Natural killer cell (primary cell): ENCODE measurements at regions of chr3 and their contacts with region 1.

Region 1: GRCh38 chr3:48478596-48479555 is 25.1 kb downstream of the SHISA5 start:
- DNase-seq: peak; percentile 64 to 81
- ATAC-seq: peak; percentile 72 to 87 (median 81)
- H3K4me3 ChIP-seq: peak overlapping the region; percentile 24
- H3K4me3 Mint-ChIP-seq: peak overlapping the region; percentile 81
- H3K27ac ChIP-seq: peak overlapping the region; percentile 86
- H3K27ac Mint-ChIP-seq: peak overlapping the region; percentile 96 to 97
- H3K4me1 ChIP-seq: peaks cover 33% of the 10 kb centered on the region
- H3K4me1 Mint-ChIP-seq: peaks cover 35 to 37% of the 10 kb centered on the region in 2 donors
- H3K27me3 ChIP-seq: no peaks in the 10 kb centered on the region
- H3K27me3 Mint-ChIP-seq: no peaks in the 10 kb centered on the region
- CTCF ChIP-seq: no peak

Region 2: GRCh38 chr3:48556793-48557626 is 78.1 kb after region 1 on chr3 and contains the start of gene PFKFB4:
- intact Hi-C with region 1: loop called (anchors 2 kb)
- DNase-seq: peak; percentile 99 to 100
- ATAC-seq: peak; percentile 88 to 95 (median 88)
- H3K4me3 ChIP-seq: peak within 1 kb of the TSS; percentile 46
- H3K4me3 Mint-ChIP-seq: peak within 1 kb of the TSS; percentile 93
- H3K27ac ChIP-seq: peak within 1 kb of the TSS; percentile 11
- H3K27ac Mint-ChIP-seq: peak within 1 kb of the TSS; percentile 44 to 67
- H3K4me1 ChIP-seq: peaks cover 52% of the 10 kb centered on the region
- H3K4me1 Mint-ChIP-seq: peaks cover 20 to 38% of the 10 kb centered on the region in 2 donors
- H3K27me3 ChIP-seq: no peaks in the 10 kb centered on the region
- H3K27me3 Mint-ChIP-seq: no peaks in the 10 kb centered on the region
- CTCF ChIP-seq: no peak
- total RNA-seq, gene PFKFB4: 2.4 to 4.3 (median 3.6) TPM

Region 3: DNA sequence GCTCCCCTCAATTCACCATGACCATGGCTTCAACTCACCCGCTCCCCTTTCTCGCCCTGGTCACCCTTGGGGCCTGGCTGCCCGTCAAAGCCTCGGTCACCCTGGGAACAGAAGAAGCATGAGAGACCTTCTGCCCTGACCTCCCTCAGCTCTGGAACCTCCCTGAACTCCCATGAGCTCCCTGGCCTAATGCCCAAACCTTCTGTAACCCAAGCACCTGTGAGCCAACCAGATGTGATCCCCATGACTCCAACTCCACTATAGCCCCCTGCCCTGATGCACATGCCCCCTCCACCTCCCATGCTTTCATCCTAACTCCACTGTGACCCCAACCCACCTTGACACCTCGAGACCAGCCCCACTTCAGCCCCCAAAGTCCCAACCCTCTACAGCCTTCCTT is 88.2 kb after region 1 on chr3:
- intact Hi-C with region 1: no loop called
- DNase-seq: no peak
- ATAC-seq: no peak
- H3K4me3 ChIP-seq: no peak overlapping the region
- H3K4me3 Mint-ChIP-seq: no peak overlapping the region
- H3K27ac ChIP-seq: no peak overlapping the region
- H3K27ac Mint-ChIP-seq: peak overlapping the region in 1 of 2 donors; percentile 94
- H3K4me1 ChIP-seq: peaks cover 30% of the 10 kb centered on the region
- H3K4me1 Mint-ChIP-seq: peaks cover 8 to 32% of the 10 kb centered on the region in 2 donors
- H3K27me3 ChIP-seq: no peaks in the 10 kb centered on the region
- H3K27me3 Mint-ChIP-seq: no peaks in the 10 kb centered on the region
- CTCF ChIP-seq: no peak